Heart right ventricle (tissue), 16 donors: ENCODE measurements at regions of chr1 and their contacts with region 1.

Region 1: GRCh38 chr1:27321813-27322577 is at the start of gene TMEM222:
- DNase-seq: peak; percentile 97 to 98
- ATAC-seq: peak; percentile 98 to 100 (median 99)
- H3K4me3 ChIP-seq: peak within 1 kb of the TSS; percentile 68 to 97 (median 86)
- H3K27ac ChIP-seq: peak within 1 kb of the TSS; percentile 81 to 96 (median 92)
- H3K4me1 ChIP-seq: peaks cover 5 to 57% (median 36%) of the 10 kb centered on the region in 9 donors
- H3K27me3 ChIP-seq: no peaks in the 10 kb centered on the region
- CTCF ChIP-seq: peak in 8 of 9 donors; percentile 6 to 44 (median 26)
- total RNA-seq, gene TMEM222: 24.1 to 32.8 (median 26.4) TPM

Region 2: GRCh38 chr1:27357281-27358037 is 35.5 kb after region 1 on chr1:
- intact Hi-C with region 1: loop called in 1 of 10 experiments (anchors 5 kb)
- DNase-seq: peak; percentile 69 to 76
- ATAC-seq: peak; percentile 33 to 87 (median 69)
- H3K4me3 ChIP-seq: peak overlapping the region in 2 of 10 donors; percentile 15 to 41
- H3K27ac ChIP-seq: peak overlapping the region in 2 of 10 donors; percentile 21 to 36
- H3K4me1 ChIP-seq: peaks cover 0 to 29% (median 10%) of the 10 kb centered on the region in 9 donors
- H3K27me3 ChIP-seq: no peaks in the 10 kb centered on the region
- CTCF ChIP-seq: peak; percentile 94 to 100 (median 98)

Region 3: DNA sequence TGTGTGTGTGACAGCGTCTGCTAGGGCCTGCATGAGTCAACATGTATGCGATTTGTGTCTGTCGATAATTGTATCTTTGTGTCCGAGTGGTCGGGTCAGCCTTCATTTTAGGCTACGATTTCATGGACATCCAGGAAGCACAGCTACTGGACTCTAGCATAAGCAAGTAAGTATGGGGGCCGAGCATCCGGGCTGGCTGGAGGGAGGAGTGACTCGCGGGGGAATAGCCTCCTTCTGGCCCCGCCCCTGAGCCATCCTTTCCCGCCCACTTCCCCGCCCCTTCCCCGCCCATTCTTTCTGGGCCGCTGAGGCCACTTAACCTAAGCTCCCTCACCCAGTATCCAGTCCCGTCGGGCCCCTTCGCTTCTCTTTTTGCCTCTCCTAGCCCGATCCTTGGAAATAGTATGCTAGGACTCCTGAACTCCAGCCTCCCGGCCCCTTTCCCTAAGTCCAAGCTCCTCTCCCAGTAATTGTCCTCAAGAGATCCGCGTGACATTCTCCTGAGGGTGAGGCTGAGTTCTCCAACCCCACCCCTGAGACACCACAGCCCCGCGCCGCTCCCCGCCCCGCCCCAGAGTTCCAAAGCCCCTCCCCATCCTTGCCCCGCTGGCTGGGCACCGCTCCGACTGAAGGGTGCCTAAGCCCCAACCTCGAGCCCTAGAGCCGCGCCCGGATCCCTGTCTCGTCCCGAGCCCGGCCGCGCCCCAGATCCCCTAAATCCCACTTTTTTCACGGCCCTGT is 43.5 kb after region 1 on chr1:
- intact Hi-C with region 1: loop called in 3 of 10 experiments (anchors 5 kb)
- DNase-seq: peak; percentile 90 to 92
- ATAC-seq: peak; percentile 75 to 90 (median 83)
- H3K4me3 ChIP-seq: peak overlapping the region; percentile 45 to 90 (median 77)
- H3K27ac ChIP-seq: peak overlapping the region; percentile 97 to 100 (median 98)
- H3K4me1 ChIP-seq: peaks cover 25 to 66% (median 43%) of the 10 kb centered on the region in 9 donors
- H3K27me3 ChIP-seq: no peaks in the 10 kb centered on the region
- CTCF ChIP-seq: no peak